Activated B cell treated with CpG ODN at 0.5 μM for 24 hours (primary cell): ENCODE measurements at regions of chr10 and their contacts with region 1.

Region 1: GRCh38 chr10:20573924-20574323 is 323.2 kb downstream of the NEBL start:
- DNase-seq: no peak
- ATAC-seq: no peak
- H3K4me3 Mint-ChIP-seq: no peak overlapping the region
- H3K27ac Mint-ChIP-seq: no peak overlapping the region
- H3K4me1 Mint-ChIP-seq: no peaks in the 10 kb centered on the region
- H3K27me3 Mint-ChIP-seq: no peaks in the 10 kb centered on the region
- CTCF ChIP-seq: no peak

Region 2: DNA sequence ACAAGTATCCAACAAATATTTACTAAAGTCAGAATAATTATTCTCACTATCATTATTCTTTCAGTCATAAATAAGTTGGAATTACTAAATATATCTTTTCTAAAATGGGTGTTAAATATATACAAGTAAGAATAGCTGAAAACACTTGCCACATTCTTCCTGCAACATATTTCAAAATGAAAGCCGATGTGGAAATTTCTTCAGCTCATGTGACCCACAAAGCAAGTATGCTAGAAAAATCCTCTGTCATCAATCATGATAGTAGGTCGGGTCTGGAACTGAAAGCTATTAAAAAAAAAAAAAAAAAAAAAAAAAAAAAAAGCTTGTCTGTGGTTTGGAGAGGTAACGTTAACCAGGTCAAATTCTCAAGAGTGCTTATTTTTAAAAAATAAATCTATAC is 21.5 kb before region 1 on chr10:
- CTCF ChIA-PET with region 1: no interaction called
- POLR2A ChIA-PET with region 1: no interaction called
- intact Hi-C with region 1: no loop called
- DNase-seq: no peak
- ATAC-seq: no peak
- H3K4me3 Mint-ChIP-seq: no peak overlapping the region
- H3K27ac Mint-ChIP-seq: no peak overlapping the region
- H3K4me1 Mint-ChIP-seq: no peaks in the 10 kb centered on the region
- H3K27me3 Mint-ChIP-seq: no peaks in the 10 kb centered on the region
- CTCF ChIP-seq: no peak

Region 3: GRCh38 chr10:20593649-20594048 is 19.7 kb after region 1 on chr10:
- CTCF ChIA-PET with region 1: no interaction called
- POLR2A ChIA-PET with region 1: no interaction called
- intact Hi-C with region 1: no loop called
- DNase-seq: no peak
- ATAC-seq: no peak
- H3K4me3 Mint-ChIP-seq: no peak overlapping the region
- H3K27ac Mint-ChIP-seq: no peak overlapping the region
- H3K4me1 Mint-ChIP-seq: no peaks in the 10 kb centered on the region
- H3K27me3 Mint-ChIP-seq: no peaks in the 10 kb centered on the region
- CTCF ChIP-seq: no peak

Region 4: GRCh38 chr10:20630092-20630643 is 56.2 kb after region 1 on chr10:
- CTCF ChIA-PET with region 1: no interaction called
- POLR2A ChIA-PET with region 1: no interaction called
- intact Hi-C with region 1: loop called (anchors 10 kb)
- DNase-seq: no peak
- ATAC-seq: no peak
- H3K4me3 Mint-ChIP-seq: no peak overlapping the region
- H3K27ac Mint-ChIP-seq: no peak overlapping the region
- H3K4me1 Mint-ChIP-seq: no peaks in the 10 kb centered on the region
- H3K27me3 Mint-ChIP-seq: no peaks in the 10 kb centered on the region
- CTCF ChIP-seq: no peak

Region 5: DNA sequence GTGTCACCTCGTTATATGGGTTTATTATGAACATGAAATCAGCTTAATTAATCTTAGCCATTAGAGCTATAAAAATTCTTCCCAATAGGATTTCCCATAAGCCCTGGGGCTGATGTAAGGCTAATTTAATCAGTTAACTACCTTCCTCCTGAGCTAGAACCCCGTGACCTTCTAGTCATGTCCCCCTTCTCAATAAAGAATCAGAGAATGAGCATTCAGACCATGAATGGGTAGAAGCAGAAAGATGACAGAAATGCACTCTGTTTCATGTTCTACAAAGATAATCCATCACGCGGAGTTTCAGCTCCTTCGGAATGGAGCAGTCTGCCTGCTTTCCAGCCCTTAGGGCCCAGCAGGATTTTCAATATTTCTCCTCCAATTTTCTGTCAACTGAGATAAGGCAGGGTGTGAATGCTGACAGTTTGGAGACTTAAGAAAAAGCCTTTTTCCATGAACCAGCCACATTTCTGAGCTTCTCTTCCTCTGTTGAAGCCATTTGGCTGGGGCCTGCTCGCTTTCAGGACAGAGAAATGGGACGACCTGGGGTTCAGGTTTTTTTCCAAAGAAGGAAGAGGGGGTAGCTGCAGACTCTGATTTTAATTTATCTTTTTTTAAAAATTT is 112.2 kb after region 1 on chr10:
- CTCF ChIA-PET with region 1: no interaction called
- POLR2A ChIA-PET with region 1: no interaction called
- intact Hi-C with region 1: no loop called
- DNase-seq: no peak
- ATAC-seq: no peak
- H3K4me3 Mint-ChIP-seq: no peak overlapping the region
- H3K27ac Mint-ChIP-seq: no peak overlapping the region
- H3K4me1 Mint-ChIP-seq: no peaks in the 10 kb centered on the region
- H3K27me3 Mint-ChIP-seq: no peaks in the 10 kb centered on the region
- CTCF ChIP-seq: no peak

Region 6: DNA sequence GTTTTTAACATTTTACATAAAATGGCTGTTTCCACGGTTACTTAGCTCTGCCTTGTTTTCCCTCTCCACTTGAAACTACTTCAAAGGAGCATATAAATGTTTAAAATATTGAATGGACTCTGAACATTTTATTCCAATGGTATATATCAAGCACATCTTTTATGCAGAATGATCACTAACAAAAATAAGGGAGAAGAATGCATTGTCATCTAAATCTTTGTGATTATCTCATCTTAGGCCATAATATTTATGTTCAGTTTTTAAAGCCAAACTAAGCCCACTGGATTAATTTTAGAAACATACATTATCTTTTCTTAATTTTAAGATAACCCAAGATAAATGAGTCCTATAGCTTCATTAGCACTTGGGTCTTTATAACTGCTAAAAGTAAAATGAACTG is 1657.3 kb after region 1 on chr10:
- CTCF ChIA-PET with region 1: no interaction called
- POLR2A ChIA-PET with region 1: no interaction called
- intact Hi-C with region 1: no loop called
- DNase-seq: no peak
- ATAC-seq: no peak
- H3K4me3 Mint-ChIP-seq: no peak overlapping the region
- H3K27ac Mint-ChIP-seq: no peak overlapping the region
- H3K4me1 Mint-ChIP-seq: peaks cover 15% of the 10 kb centered on the region
- H3K27me3 Mint-ChIP-seq: peaks cover 6% of the 10 kb centered on the region
- CTCF ChIP-seq: no peak